ENCODE measurements at regions of chr9 and their contacts with region 1.

Region 1: GRCh38 chr9:105318729-105319191 is 74.3 kb downstream of the SLC44A1 start:
- DNase-seq: peak; percentile 63 to 65
- H3K4me3 ChIP-seq: no peak overlapping the region
- H3K4me3 Mint-ChIP-seq: peak overlapping the region; percentile 62
- H3K27ac Mint-ChIP-seq: peak overlapping the region; percentile 85
- H3K4me1 ChIP-seq: peaks cover 36% of the 10 kb centered on the region
- H3K4me1 Mint-ChIP-seq: peaks cover 32% of the 10 kb centered on the region
- H3K27me3 ChIP-seq: no peaks in the 10 kb centered on the region
- H3K27me3 Mint-ChIP-seq: no peaks in the 10 kb centered on the region
- CTCF ChIP-seq: no peak

Region 2: GRCh38 chr9:105251733-105252404 is 66.9 kb before region 1 on chr9:
- CTCF ChIA-PET with region 1: no interaction called
- POLR2A ChIA-PET with region 1: no interaction called
- intact Hi-C with region 1: loop called (anchors 2 kb)
- DNase-seq: peak in 1 of 2 experiments; percentile 16
- H3K4me3 ChIP-seq: no peak overlapping the region
- H3K4me3 Mint-ChIP-seq: no peak overlapping the region
- H3K27ac Mint-ChIP-seq: peak overlapping the region; percentile 4
- H3K4me1 ChIP-seq: peaks cover 11% of the 10 kb centered on the region; the same call in 1 of the 2 replicates
- H3K4me1 Mint-ChIP-seq: peaks cover 13% of the 10 kb centered on the region
- H3K27me3 ChIP-seq: no peaks in the 10 kb centered on the region
- H3K27me3 Mint-ChIP-seq: no peaks in the 10 kb centered on the region
- CTCF ChIP-seq: no peak

Region 3: DNA sequence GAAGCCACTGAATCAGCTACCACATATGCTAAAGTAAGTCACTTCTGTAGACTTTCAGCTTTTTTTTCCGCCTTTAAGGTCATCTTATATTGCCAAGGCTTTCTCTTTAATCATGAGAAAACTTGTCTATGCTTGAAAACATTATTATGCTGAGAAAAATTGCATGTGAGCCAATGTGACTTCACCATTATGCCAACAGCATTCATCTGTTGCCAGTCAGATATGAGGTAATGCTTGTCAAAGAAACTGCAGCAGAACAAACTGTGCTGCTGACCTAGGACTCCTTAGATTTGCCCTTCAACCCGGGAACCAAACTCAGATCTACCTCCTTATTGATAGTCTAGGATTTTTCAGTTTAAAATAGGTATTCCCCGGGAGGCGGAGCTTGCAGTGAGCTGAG is 40.0 kb before region 1 on chr9:
- CTCF ChIA-PET with region 1: no interaction called
- POLR2A ChIA-PET with region 1: no interaction called
- intact Hi-C with region 1: no loop called
- DNase-seq: no peak
- H3K4me3 ChIP-seq: no peak overlapping the region
- H3K4me3 Mint-ChIP-seq: no peak overlapping the region
- H3K27ac Mint-ChIP-seq: no peak overlapping the region
- H3K4me1 ChIP-seq: peaks cover 8% of the 10 kb centered on the region
- H3K4me1 Mint-ChIP-seq: peaks cover 5% of the 10 kb centered on the region
- H3K27me3 ChIP-seq: no peaks in the 10 kb centered on the region
- H3K27me3 Mint-ChIP-seq: no peaks in the 10 kb centered on the region
- CTCF ChIP-seq: no peak

Region 4: GRCh38 chr9:105299190-105299854 is 19.4 kb before region 1 on chr9:
- CTCF ChIA-PET with region 1: no interaction called
- POLR2A ChIA-PET with region 1: no interaction called
- intact Hi-C with region 1: loop called (anchors 1 kb)
- DNase-seq: no peak
- H3K4me3 ChIP-seq: no peak overlapping the region
- H3K4me3 Mint-ChIP-seq: no peak overlapping the region
- H3K27ac Mint-ChIP-seq: no peak overlapping the region
- H3K4me1 ChIP-seq: peaks cover 19% of the 10 kb centered on the region
- H3K4me1 Mint-ChIP-seq: peaks cover 15% of the 10 kb centered on the region
- H3K27me3 ChIP-seq: no peaks in the 10 kb centered on the region
- H3K27me3 Mint-ChIP-seq: no peaks in the 10 kb centered on the region
- CTCF ChIP-seq: no peak

Region 5: DNA sequence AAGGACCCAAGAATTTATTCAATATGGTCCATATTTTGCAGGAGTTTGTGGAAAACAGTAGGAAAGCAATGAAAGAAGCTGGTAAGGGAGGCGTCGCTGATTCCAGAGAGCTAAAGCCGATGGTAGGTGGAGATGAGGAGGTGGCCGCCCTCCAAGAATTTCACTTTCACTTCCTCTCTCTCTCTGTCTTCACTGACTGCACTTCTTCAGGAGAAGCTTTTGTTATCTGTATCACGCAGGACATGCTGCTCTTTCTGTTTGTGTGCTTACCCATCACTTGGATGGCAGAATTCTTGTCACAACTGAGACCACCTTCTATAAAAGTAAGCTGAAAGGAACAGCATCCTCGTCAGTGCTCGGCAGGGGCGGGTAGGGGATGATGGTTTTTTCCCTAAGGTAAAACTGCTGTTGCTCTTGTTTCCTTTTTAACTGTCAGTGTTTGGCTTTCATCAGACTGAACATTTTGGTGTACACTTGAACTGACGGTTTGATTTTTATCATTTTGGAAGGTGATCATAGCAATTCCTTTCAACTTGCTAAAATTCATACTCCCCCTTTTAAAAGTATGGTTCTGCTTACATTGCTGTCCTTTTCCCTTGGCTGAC is 66.7 kb after region 1 on chr9:
- CTCF ChIA-PET with region 1: no interaction called
- POLR2A ChIA-PET with region 1: no interaction called
- intact Hi-C with region 1: no loop called
- DNase-seq: no peak
- H3K4me3 ChIP-seq: no peak overlapping the region
- H3K4me3 Mint-ChIP-seq: no peak overlapping the region
- H3K27ac Mint-ChIP-seq: no peak overlapping the region
- H3K4me1 ChIP-seq: no peaks in the 10 kb centered on the region
- H3K4me1 Mint-ChIP-seq: no peaks in the 10 kb centered on the region
- H3K27me3 ChIP-seq: no peaks in the 10 kb centered on the region
- H3K27me3 Mint-ChIP-seq: no peaks in the 10 kb centered on the region
- CTCF ChIP-seq: no peak